ENCODE measurements at regions of chr16 and their contacts with region 1.

Region 1: DNA sequence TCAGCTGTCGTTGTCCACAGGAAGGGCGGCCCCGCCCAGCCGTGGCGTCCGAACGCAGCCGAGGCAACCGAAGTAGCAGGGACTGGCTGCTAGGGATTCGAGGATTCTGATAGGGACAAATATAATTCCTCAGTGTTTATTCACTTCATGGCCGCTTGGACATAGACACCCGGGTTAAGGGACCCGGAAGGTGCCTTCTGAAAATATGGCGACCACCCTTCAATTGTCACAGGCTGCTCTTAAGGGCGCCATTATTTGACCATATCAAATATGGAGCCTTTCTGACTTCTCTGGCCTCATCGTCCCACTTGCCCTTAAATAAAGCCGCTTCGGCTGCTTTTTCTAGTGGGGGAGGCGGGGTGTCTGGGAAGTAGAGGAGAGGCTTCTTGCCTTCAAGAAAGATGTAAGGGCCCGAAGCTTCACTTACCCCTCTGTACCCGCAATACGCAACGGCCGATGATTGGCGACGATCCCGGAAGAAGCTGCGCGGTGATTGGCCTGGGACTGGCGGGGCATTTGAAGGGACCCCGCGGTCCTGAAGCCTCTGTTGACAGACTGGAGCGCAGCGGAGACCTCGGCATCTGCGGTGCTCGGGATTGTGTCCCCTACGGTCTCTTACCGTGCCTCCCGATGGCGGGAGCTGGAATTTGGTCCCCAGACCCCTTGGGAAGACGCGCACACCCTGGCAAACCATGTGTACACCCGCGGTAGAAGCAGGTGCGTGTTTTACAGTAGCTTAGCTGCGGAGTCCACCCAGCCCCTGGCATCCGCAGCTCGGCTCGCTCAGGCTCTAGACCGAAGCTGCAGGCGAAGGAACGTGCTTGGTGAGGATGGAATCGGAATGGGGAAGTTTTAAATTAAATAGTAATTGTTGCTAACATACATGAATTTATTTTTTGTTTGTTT is at the start of gene ZNF688:
- DNase-seq: peak; percentile 95 to 97 (median 96)
- H3K4me3 ChIP-seq: peak within 1 kb of the TSS; percentile 91
- H3K27ac ChIP-seq: peak within 1 kb of the TSS; percentile 90 to 98
- H3K4me1 ChIP-seq: peaks cover 10% of the 10 kb centered on the region
- H3K27me3 ChIP-seq: no peaks in the 10 kb centered on the region
- CTCF ChIP-seq: peak in 1 of 3 donors; percentile 22
- EP300 ChIP-seq: no peak
- POLR2A ChIP-seq: peak; percentile 66
- total RNA-seq, gene ZNF688: 10.4 to 31.2 (median 15.4) TPM

Region 2: DNA sequence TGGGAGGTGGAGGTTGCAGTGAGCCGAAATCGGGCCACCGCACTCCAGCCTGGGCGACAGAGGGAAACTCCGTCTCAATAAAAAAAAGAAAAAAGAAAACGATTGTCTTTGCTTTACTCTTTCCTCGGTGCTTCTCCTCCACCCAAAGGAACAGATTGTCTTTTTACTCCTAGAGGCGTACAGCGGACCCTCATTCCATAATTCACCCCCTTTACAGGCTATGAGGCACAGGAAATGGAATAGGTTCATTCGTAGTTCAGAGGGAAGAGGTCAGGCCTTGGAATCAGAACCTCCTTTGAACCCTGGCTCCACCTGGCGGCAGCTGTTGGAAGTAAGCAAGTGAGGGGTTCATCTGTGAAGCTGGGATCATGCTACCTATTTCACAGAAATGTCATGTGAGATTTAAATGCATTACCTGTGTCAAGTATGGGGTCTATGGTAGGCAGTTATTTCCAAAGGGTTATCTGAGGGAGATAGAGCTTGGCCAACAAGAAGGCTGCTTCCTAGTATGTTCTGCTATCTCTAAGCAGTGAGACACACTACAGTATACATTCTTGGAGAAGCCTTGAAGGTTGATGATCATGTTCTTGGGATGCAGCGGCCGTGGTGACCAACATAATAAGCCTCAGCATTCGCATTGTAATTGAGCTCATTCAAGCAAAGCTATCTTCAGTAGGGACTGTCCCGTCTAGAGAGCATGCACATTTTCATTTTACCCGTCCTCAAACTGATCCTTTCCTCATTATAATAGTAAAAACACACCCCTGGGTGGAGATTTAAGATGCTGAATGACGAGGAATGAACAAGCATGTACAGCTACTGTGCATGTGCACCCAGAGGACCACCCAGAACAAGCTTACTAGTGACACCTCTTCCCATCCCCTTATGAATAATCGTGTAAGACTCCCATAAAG is 56.9 kb after region 1 on chr16:
- intact Hi-C with region 1: no loop called
- DNase-seq: peak; percentile 75 to 90 (median 86)
- H3K4me3 ChIP-seq: no peak overlapping the region
- H3K27ac ChIP-seq: no peak overlapping the region
- H3K4me1 ChIP-seq: no peaks in the 10 kb centered on the region
- H3K27me3 ChIP-seq: no peaks in the 10 kb centered on the region
- CTCF ChIP-seq: peak; percentile 69 to 85 (median 79)
- EP300 ChIP-seq: no peak
- POLR2A ChIP-seq: no peak

Region 3: GRCh38 chr16:30698139-30698815 is 126.3 kb after region 1 on chr16:
- intact Hi-C with region 1: loop called in 1 of 4 experiments (anchors 5 kb)
- DNase-seq: peak; percentile 99
- H3K4me3 ChIP-seq: peak overlapping the region; percentile 73
- H3K27ac ChIP-seq: peak overlapping the region; percentile 97 to 99
- H3K4me1 ChIP-seq: peaks cover 5% of the 10 kb centered on the region
- H3K27me3 ChIP-seq: no peaks in the 10 kb centered on the region
- CTCF ChIP-seq: no peak
- EP300 ChIP-seq: peak; percentile 44
- POLR2A ChIP-seq: peak; percentile 69